WTC11 (cell line): ENCODE measurements at regions of chrX and their contacts with region 1.

Region 1: GRCh38 chrX:53481816-53482465 is 47.8 kb upstream of the HSD17B10 start:
- DNase-seq: peak; percentile 57
- ATAC-seq: peak; percentile 54
- H3K4me3 Mint-ChIP-seq: no peak overlapping the region
- H3K27ac Mint-ChIP-seq: no peak overlapping the region
- H3K4me1 Mint-ChIP-seq: peaks cover 5% of the 10 kb centered on the region; the same call in 1 of the 2 replicates
- H3K27me3 Mint-ChIP-seq: 0 out of 2 replicates have a peak, but pooled peaks cover 2% of the 10 kb centered on the region
- CTCF ChIP-seq: 0 out of 2 replicates have a peak, but pooled peaks have one; percentile 17

Region 2: GRCh38 chrX:53284684-53285447 is 197.1 kb before region 1 on chrX:
- CTCF ChIA-PET with region 1: interaction called, 12 read pairs
- POLR2A ChIA-PET with region 1: no interaction called
- DNase-seq: peak; percentile 69
- ATAC-seq: peak; percentile 66
- H3K4me3 Mint-ChIP-seq: no peak overlapping the region
- H3K27ac Mint-ChIP-seq: no peak overlapping the region
- H3K4me1 Mint-ChIP-seq: peaks cover 38% of the 10 kb centered on the region
- H3K27me3 Mint-ChIP-seq: no peaks in the 10 kb centered on the region
- CTCF ChIP-seq: peak; percentile 58

Region 3: GRCh38 chrX:53330331-53330730 is 151.6 kb before region 1 on chrX:
- CTCF ChIA-PET with region 1: no interaction called
- POLR2A ChIA-PET with region 1: no interaction called
- DNase-seq: no peak
- ATAC-seq: no peak
- H3K4me3 Mint-ChIP-seq: no peak overlapping the region
- H3K27ac Mint-ChIP-seq: no peak overlapping the region
- H3K4me1 Mint-ChIP-seq: peaks cover 30% of the 10 kb centered on the region
- H3K27me3 Mint-ChIP-seq: peaks cover 5% of the 10 kb centered on the region
- CTCF ChIP-seq: no peak

Region 4: DNA sequence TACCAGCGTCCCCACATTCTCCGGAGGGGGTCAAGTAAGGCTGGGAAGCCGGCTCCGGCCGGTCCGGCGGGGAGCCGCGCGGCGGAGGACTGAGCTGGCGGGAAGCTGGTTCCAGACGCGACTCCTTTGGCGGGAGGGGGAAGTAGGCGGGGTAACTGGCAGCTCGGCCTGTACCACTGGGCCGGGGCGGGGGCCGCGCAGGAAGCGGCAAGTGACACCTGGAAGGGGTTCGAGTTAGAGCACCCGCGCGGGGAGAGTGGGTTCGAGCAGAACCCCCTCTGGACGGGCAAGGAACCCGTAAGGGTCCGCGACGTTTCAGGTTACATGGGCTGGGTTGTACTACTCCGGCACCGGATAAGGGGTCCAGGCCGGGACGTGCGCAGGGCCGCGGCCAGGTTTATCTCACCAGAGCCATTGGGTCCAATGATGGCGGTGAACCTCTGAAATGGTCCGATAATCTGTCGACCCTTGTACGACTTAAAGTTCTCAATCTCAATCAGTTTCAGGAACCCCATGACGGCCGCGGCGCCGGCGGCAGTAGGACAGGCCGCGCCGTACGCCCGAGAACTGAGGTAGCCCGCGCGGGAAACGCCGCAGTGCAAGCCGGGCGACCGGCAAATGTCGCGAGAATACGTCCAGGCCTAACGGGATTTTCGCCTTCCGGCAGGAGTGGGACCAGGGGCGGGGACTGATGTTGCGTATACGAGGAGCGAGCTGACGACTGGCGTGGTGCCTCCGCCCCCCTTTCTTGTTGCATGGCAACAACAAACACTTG is 59.7 kb before region 1 on chrX and contains the start of gene SMC1A:
- CTCF ChIA-PET with region 1: interaction called, 14 read pairs
- POLR2A ChIA-PET with region 1: no interaction called
- DNase-seq: peak; percentile 95
- ATAC-seq: peak; percentile 91
- H3K4me3 Mint-ChIP-seq: peak within 1 kb of the TSS; percentile 96
- H3K27ac Mint-ChIP-seq: peak within 1 kb of the TSS; percentile 100
- H3K4me1 Mint-ChIP-seq: peaks cover 14% of the 10 kb centered on the region
- H3K27me3 Mint-ChIP-seq: no peaks in the 10 kb centered on the region
- CTCF ChIP-seq: no peak
- total RNA-seq, gene SMC1A: 87.4 to 98.7 TPM (median 89.3 TPM) in 3 replicates

Region 5: GRCh38 chrX:53441531-53442321 is 40.2 kb before region 1 on chrX:
- CTCF ChIA-PET with region 1: interaction called, 18 read pairs
- POLR2A ChIA-PET with region 1: no interaction called
- DNase-seq: peak; percentile 82
- ATAC-seq: peak; percentile 91
- H3K4me3 Mint-ChIP-seq: peak overlapping the region; percentile 69
- H3K27ac Mint-ChIP-seq: no peak overlapping the region
- H3K4me1 Mint-ChIP-seq: peaks cover 4% of the 10 kb centered on the region
- H3K27me3 Mint-ChIP-seq: peaks cover 21% of the 10 kb centered on the region
- CTCF ChIP-seq: no peak

Region 6: GRCh38 chrX:53458082-53458481 is 23.9 kb before region 1 on chrX:
- CTCF ChIA-PET with region 1: interaction called, 23 read pairs
- POLR2A ChIA-PET with region 1: no interaction called
- DNase-seq: no peak
- ATAC-seq: no peak
- H3K4me3 Mint-ChIP-seq: no peak overlapping the region
- H3K27ac Mint-ChIP-seq: no peak overlapping the region
- H3K4me1 Mint-ChIP-seq: no peaks in the 10 kb centered on the region
- H3K27me3 Mint-ChIP-seq: peaks cover under 1% of the 10 kb centered on the region
- CTCF ChIP-seq: no peak

Region 7: GRCh38 chrX:53494436-53494835 is 12.5 kb after region 1 on chrX:
- CTCF ChIA-PET with region 1: interaction called, 19 read pairs
- POLR2A ChIA-PET with region 1: no interaction called
- DNase-seq: no peak
- ATAC-seq: no peak
- H3K4me3 Mint-ChIP-seq: no peak overlapping the region
- H3K27ac Mint-ChIP-seq: no peak overlapping the region
- H3K4me1 Mint-ChIP-seq: peaks cover 5% of the 10 kb centered on the region; the same call in 1 of the 2 replicates
- H3K27me3 Mint-ChIP-seq: no peaks in the 10 kb centered on the region
- CTCF ChIP-seq: no peak

Region 8: DNA sequence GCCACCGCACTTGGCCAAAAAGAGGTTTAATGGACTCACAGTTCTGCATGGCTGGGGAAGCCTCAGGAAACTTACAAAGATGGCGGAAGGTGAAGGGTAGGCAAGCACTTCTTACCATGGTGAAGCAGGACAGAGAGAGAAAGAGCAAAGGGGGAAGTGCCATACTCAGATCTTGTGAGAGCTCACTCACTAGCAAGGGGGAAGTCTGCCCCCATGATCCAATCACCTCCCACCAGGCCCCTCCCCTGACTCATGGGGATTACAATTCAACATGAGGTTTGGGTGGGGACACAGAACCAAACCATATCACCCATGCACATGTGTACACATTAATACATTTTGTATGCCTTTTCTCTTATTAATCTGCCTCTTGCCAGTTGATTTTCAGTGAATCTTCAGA is 29.4 kb after region 1 on chrX:
- CTCF ChIA-PET with region 1: interaction called, 15 read pairs
- POLR2A ChIA-PET with region 1: no interaction called
- DNase-seq: no peak
- ATAC-seq: no peak
- H3K4me3 Mint-ChIP-seq: no peak overlapping the region
- H3K27ac Mint-ChIP-seq: no peak overlapping the region
- H3K4me1 Mint-ChIP-seq: peaks cover 5% of the 10 kb centered on the region; the same call in 1 of the 2 replicates
- H3K27me3 Mint-ChIP-seq: peaks cover 3% of the 10 kb centered on the region; the same call in 1 of the 2 replicates
- CTCF ChIP-seq: no peak